GM12878 (cell line): ENCODE measurements at regions of chr6 and their contacts with region 1.

Region 1: GRCh38 chr6:74598473-74599393 is 607.1 kb downstream of the COL12A1 start:
- DNase-seq: peak; percentile 81
- ATAC-seq: peak; percentile 94
- H3K4me3 ChIP-seq: peak overlapping the region; percentile 28; the same call in 1 of the 2 replicates
- H3K27ac ChIP-seq: peak overlapping the region; percentile 60
- H3K4me1 ChIP-seq: peaks cover 17% of the 10 kb centered on the region
- H3K27me3 ChIP-seq: no peaks in the 10 kb centered on the region
- CTCF ChIP-seq: no peak
- EP300 ChIP-seq: peak; percentile 96 to 98
- POLR2A ChIP-seq: no peak
- RAD21 ChIP-seq: 0 out of 2 replicates have a peak, but pooled peaks have one; percentile 12

Region 2: GRCh38 chr6:74447013-74447412 is 151.7 kb before region 1 on chr6:
- CTCF ChIA-PET with region 1: no interaction called
- POLR2A ChIA-PET with region 1: no interaction called
- RAD21 ChIA-PET with region 1: no interaction called
- SMC1A ChIA-PET with region 1: no interaction called
- in situ Hi-C with region 1: no loop called
- intact Hi-C with region 1: loop called (anchors 2 kb)
- DNase-seq: peak; percentile 27
- ATAC-seq: peak; percentile 87
- H3K4me3 ChIP-seq: no peak overlapping the region
- H3K27ac ChIP-seq: no peak overlapping the region
- H3K4me1 ChIP-seq: no peaks in the 10 kb centered on the region
- H3K27me3 ChIP-seq: no peaks in the 10 kb centered on the region
- CTCF ChIP-seq: no peak
- EP300 ChIP-seq: peak in 1 of 2 experiments; percentile 41; a peak in 2 of 4 replicates
- POLR2A ChIP-seq: no peak
- RAD21 ChIP-seq: no peak

Region 3: DNA sequence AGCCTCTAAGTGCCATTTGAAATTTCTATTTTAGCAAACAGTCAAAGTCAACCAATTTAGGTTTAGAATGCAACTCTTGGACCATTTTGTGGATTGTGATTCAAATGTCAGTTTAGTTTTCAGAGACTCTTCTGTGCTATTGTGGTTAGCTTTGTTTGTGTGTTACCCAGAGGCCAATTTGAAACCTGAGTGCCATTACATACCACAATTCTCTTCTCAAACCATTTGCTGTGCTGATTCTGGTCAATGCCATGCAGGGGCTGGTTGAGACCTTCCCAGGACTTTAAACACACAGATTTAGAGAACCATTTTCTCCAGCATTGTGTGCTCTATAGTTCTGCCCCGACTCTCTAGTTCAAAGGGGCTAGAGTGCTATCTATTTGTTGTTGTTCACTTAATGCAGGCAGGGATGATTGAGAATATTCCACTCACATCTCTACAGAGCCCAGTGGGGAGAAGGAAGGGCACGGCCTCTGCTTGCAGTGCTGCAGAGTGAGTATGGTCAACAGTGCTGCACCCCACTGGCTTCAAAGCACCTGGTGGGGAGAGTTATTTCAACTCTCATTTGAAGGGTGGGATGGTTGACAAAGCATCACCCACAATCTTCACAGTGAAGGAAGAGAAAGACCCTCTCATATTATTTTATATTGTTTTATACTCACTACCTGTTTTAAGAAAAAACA is 131.1 kb before region 1 on chr6:
- CTCF ChIA-PET with region 1: no interaction called
- POLR2A ChIA-PET with region 1: no interaction called
- RAD21 ChIA-PET with region 1: no interaction called
- SMC1A ChIA-PET with region 1: interaction called, 3 read pairs
- in situ Hi-C with region 1: no loop called
- intact Hi-C with region 1: loop called (anchors 5 kb)
- DNase-seq: no peak
- ATAC-seq: peak; percentile 68
- H3K4me3 ChIP-seq: no peak overlapping the region
- H3K27ac ChIP-seq: no peak overlapping the region
- H3K4me1 ChIP-seq: no peaks in the 10 kb centered on the region
- H3K27me3 ChIP-seq: no peaks in the 10 kb centered on the region
- CTCF ChIP-seq: no peak
- EP300 ChIP-seq: no peak
- POLR2A ChIP-seq: no peak
- RAD21 ChIP-seq: no peak

Region 4: GRCh38 chr6:74574794-74575193 is 23.9 kb before region 1 on chr6:
- CTCF ChIA-PET with region 1: interaction called, 9 read pairs
- POLR2A ChIA-PET with region 1: interaction called, 3 read pairs
- RAD21 ChIA-PET with region 1: no interaction called
- SMC1A ChIA-PET with region 1: interaction called, 10 read pairs
- in situ Hi-C with region 1: no loop called
- intact Hi-C with region 1: loop called (anchors 2 kb)
- DNase-seq: no peak
- ATAC-seq: peak; percentile 50
- H3K4me3 ChIP-seq: no peak overlapping the region
- H3K27ac ChIP-seq: no peak overlapping the region
- H3K4me1 ChIP-seq: peaks cover 12% of the 10 kb centered on the region
- H3K27me3 ChIP-seq: no peaks in the 10 kb centered on the region
- CTCF ChIP-seq: peak; percentile 41 to 52 (median 47); a peak in 5 of 6 replicates
- EP300 ChIP-seq: no peak
- POLR2A ChIP-seq: no peak
- RAD21 ChIP-seq: peak; percentile 57; the same call in 1 of the 2 replicates

Region 5: DNA sequence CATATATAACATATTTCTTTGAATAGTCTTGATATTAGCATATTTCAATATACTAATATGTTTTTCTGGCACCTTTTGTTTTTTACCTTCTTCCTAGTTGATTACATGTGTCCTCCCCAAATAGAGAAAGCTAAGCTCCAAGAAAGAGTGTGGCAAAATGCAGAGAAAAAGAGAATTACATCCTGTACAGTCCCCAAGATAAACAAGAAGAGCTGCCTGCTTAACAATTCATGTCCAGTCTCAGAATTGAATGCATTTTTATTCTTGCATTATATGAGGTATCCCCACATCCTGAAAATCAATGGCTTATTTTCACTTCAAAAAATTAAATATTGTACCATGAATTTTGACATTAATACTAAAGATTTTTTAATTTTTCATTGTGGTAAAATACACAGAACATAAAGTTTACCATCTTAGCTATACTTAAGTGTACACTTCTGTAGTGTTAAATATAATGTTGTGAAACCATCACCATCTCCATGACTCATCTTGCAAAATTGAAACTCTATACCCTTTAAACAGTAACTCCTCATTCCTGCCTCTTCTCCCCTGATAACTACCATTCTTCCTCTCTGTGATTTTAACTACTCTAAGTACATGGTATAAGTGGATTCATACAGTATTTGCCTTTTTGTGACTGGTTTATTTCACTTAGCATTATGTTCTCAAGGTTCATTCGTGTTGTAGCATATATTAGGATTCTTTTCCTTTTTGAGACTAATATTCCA is 116.8 kb after region 1 on chr6:
- CTCF ChIA-PET with region 1: no interaction called
- POLR2A ChIA-PET with region 1: no interaction called
- RAD21 ChIA-PET with region 1: no interaction called
- SMC1A ChIA-PET with region 1: no interaction called
- in situ Hi-C with region 1: no loop called
- intact Hi-C with region 1: loop called (anchors 5 kb)
- DNase-seq: no peak
- ATAC-seq: peak; percentile 85
- H3K4me3 ChIP-seq: no peak overlapping the region
- H3K27ac ChIP-seq: no peak overlapping the region
- H3K4me1 ChIP-seq: no peaks in the 10 kb centered on the region
- H3K27me3 ChIP-seq: no peaks in the 10 kb centered on the region
- CTCF ChIP-seq: no peak
- EP300 ChIP-seq: no peak
- POLR2A ChIP-seq: no peak
- RAD21 ChIP-seq: no peak